Caco-2 (cell line): ENCODE measurements at regions of chr6 and their contacts with region 1.

Region 1: GRCh38 chr6:158072083-158072721 is 90.5 kb downstream of the SYNJ2 start:
- DNase-seq: peak; percentile 76 to 77
- H3K4me3 ChIP-seq: no peak overlapping the region
- H3K4me3 Mint-ChIP-seq: no peak overlapping the region
- H3K27ac Mint-ChIP-seq: peak overlapping the region; percentile 79
- H3K4me1 ChIP-seq: peaks cover 8% of the 10 kb centered on the region; the same call in 1 of the 2 replicates
- H3K4me1 Mint-ChIP-seq: peaks cover 7% of the 10 kb centered on the region
- H3K27me3 ChIP-seq: no peaks in the 10 kb centered on the region
- H3K27me3 Mint-ChIP-seq: no peaks in the 10 kb centered on the region
- CTCF ChIP-seq: peak; percentile 83 to 87

Region 2: GRCh38 chr6:157946865-157947532 is 125.2 kb before region 1 on chr6:
- CTCF ChIA-PET with region 1: interaction called, 3 read pairs
- POLR2A ChIA-PET with region 1: no interaction called
- intact Hi-C with region 1: loop called (anchors 2 kb)
- DNase-seq: peak in 1 of 2 experiments; percentile 33
- H3K4me3 ChIP-seq: no peak overlapping the region
- H3K4me3 Mint-ChIP-seq: no peak overlapping the region
- H3K27ac Mint-ChIP-seq: no peak overlapping the region
- H3K4me1 ChIP-seq: peaks cover 6% of the 10 kb centered on the region
- H3K4me1 Mint-ChIP-seq: peaks cover under 1% of the 10 kb centered on the region
- H3K27me3 ChIP-seq: no peaks in the 10 kb centered on the region
- H3K27me3 Mint-ChIP-seq: no peaks in the 10 kb centered on the region
- CTCF ChIP-seq: peak; percentile 23 to 84

Region 3: DNA sequence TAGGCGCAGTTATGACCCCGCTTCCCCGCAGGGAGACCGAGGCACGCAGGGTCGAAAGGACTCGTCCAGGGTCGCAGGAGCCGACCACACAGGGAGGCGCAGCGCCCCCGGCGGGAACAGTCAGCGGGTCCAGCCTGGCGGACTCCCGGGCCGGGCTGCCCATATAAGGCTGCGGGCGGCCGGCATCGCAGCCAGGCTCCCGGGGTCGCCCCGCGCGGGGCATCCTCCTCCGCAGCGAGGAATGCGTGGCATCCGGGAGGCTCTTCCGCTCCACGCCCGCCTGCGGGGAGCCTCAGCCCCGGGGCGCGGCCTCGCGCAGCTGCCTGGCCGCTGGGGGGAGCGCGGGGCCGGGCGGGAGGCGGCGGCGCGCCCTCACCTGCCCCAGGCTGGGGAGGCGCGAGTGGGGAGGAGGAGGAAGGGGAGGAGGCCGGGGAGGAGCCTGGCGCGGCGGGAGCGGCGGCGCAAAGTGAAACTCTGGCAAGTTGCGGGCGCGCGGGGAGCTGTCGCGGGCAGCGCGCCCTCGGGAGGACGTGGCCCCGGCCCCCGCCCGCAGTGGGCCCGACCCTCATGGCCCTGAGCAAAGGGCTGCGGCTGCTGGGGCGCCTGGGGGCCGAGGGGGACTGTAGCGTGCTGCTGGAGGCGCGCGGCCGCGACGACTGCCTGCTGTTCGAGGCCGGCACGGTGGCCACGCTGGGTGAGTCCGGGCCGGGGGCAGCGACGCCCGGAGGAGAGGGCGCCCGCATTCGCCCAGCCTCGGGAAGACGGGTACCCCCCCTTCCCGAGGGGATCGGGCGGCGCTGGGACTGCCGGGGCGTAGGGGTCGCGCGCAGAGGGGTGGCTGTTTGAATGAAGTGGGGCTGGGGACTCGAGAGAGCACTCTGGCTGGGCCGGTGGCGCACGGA is 90.6 kb before region 1 on chr6 and contains the start of gene SYNJ2:
- CTCF ChIA-PET with region 1: no interaction called
- POLR2A ChIA-PET with region 1: interaction called, 3 read pairs
- intact Hi-C with region 1: loop called (anchors 1 kb)
- DNase-seq: peak; percentile 86 to 91
- H3K4me3 ChIP-seq: peak within 1 kb of the TSS; percentile 92
- H3K4me3 Mint-ChIP-seq: peak within 1 kb of the TSS; percentile 74
- H3K27ac Mint-ChIP-seq: peak within 1 kb of the TSS; percentile 34
- H3K4me1 ChIP-seq: peaks cover 55% of the 10 kb centered on the region
- H3K4me1 Mint-ChIP-seq: peaks cover 8% of the 10 kb centered on the region
- H3K27me3 ChIP-seq: no peaks in the 10 kb centered on the region
- H3K27me3 Mint-ChIP-seq: no peaks in the 10 kb centered on the region
- CTCF ChIP-seq: no peak
- total RNA-seq, gene SYNJ2: 45.0 and 47.9 TPM in 2 replicates

Region 4: DNA sequence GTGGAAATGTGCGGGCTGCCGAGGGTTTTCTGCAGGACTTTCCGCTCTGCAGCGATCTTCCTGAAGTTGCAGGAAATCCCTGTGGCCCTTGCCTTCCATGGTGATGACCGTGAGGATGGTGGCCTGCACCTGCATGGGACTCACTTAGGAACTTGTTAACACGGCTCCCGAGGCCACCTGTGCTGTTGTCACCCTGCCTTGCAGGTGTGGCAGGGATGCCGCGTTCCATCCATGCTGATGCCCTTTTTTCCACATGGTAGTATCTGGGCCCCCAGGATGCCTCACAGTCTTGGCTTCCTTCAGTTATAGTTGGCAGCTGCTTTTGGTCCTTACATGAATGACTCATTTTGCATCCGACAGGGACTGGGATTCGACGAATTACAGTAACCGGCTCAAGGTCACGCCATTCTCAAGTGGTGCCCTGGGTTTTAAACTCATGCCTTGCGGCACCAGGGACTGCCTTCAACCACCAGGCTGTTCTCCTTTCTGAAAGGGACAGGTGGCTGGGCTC is 53.3 kb before region 1 on chr6:
- CTCF ChIA-PET with region 1: no interaction called
- POLR2A ChIA-PET with region 1: no interaction called
- intact Hi-C with region 1: no loop called
- DNase-seq: no peak
- H3K4me3 ChIP-seq: no peak overlapping the region
- H3K4me3 Mint-ChIP-seq: no peak overlapping the region
- H3K27ac Mint-ChIP-seq: no peak overlapping the region
- H3K4me1 ChIP-seq: no peaks in the 10 kb centered on the region; the same call in 1 of the 2 replicates
- H3K4me1 Mint-ChIP-seq: peaks cover 9% of the 10 kb centered on the region
- H3K27me3 ChIP-seq: no peaks in the 10 kb centered on the region
- H3K27me3 Mint-ChIP-seq: no peaks in the 10 kb centered on the region
- CTCF ChIP-seq: no peak

Region 5: DNA sequence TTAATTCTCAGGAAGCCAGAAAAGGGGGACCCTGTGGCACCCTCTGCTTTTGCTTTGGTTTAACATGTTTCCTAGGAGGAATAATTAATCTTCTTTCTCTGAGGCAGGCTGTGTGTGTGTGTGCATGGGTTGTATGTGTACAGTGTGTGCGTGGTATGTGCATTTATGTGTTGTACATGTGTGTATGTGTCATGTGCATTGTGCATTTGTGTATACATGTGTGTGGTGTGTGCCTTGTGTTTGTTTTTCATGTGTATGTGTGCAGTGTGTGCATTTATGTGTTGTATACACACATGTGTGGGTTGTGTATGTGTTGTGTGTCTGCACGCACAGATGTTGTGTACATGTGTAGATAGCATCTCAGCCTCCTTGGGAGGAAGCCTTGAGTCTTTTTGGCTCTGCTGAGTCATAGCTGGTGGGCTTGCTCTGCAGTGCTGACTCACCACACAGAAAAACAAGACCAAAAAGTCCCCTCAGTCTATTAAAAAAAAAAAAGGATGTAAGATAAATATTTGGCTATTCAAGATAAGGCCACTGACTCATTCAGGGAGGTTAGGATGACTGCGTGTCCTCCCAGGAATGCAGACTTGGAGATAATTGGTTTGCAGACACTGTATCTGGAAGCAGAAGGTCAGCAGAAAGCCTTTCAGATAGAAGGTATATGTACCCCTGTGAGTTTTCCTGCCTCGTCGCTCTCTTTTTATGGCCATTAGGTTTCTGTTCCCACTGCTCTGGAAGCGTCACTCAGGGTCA is 32.0 kb before region 1 on chr6:
- CTCF ChIA-PET with region 1: interaction called, 3 read pairs
- POLR2A ChIA-PET with region 1: no interaction called
- intact Hi-C with region 1: loop called (anchors 2 kb)
- DNase-seq: peak; percentile 82 to 86
- H3K4me3 ChIP-seq: no peak overlapping the region; the same call in 1 of the 2 replicates
- H3K4me3 Mint-ChIP-seq: peak overlapping the region; percentile 67
- H3K27ac Mint-ChIP-seq: peak overlapping the region; percentile 92
- H3K4me1 ChIP-seq: peaks cover 65% of the 10 kb centered on the region
- H3K4me1 Mint-ChIP-seq: peaks cover 54% of the 10 kb centered on the region
- H3K27me3 ChIP-seq: no peaks in the 10 kb centered on the region
- H3K27me3 Mint-ChIP-seq: no peaks in the 10 kb centered on the region
- CTCF ChIP-seq: no peak

Region 6: GRCh38 chr6:158131926-158132325 is 59.7 kb after region 1 on chr6:
- CTCF ChIA-PET with region 1: interaction called, 5 read pairs
- POLR2A ChIA-PET with region 1: no interaction called
- intact Hi-C with region 1: loop called (anchors 5 kb)
- DNase-seq: peak in 1 of 2 experiments; percentile 37
- H3K4me3 ChIP-seq: no peak overlapping the region
- H3K4me3 Mint-ChIP-seq: no peak overlapping the region
- H3K27ac Mint-ChIP-seq: no peak overlapping the region
- H3K4me1 ChIP-seq: no peaks in the 10 kb centered on the region
- H3K4me1 Mint-ChIP-seq: no peaks in the 10 kb centered on the region
- H3K27me3 ChIP-seq: no peaks in the 10 kb centered on the region
- H3K27me3 Mint-ChIP-seq: no peaks in the 10 kb centered on the region
- CTCF ChIP-seq: peak; percentile 56 to 67